ENCODE measurements at regions of chr2 and their contacts with region 1.

Region 1: DNA sequence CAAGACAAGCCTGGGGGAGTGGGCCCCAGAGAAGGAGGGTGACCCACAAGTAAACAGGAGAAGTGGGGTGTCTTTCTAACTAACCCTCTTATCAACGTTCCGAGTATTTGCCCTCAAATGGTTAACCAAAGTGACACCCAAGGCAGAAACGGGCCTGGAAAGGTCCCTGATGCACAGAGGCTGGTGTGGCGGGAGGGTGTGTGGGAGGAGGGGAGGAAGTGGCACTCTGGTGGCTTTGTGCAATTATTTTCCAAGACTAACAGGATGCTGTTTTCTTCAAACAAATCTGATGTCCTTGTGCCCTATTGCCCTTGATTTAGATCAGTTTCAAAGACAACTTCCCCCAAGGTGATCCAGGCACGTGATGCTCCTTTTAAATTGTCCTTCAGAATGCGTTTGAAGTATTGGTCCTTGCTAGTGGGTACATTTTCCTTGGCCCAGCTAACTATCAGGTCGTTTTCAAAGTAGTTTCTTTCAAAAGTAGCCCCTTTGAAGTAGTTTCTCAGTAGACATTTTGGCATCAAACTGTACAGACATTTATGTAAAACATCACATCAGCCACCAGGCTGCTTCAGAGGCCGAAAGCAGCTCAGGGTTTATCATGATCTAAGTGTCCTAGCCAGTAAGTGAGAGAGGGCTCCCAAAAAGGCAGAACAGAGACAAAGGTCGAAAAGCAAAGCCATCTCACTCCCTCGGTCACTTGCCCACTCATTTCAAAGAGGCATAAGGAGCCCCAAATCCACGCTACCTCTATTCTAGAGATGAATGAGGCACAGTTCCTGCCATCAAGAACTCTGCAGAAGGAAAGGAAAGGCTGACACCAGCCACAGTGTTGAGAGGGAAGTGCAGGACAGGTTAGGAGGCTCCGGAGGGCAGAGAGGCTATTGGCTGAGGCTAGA is 371.1 kb upstream of the ID2 start:
- DNase-seq: peak in 6 of 9 donors; percentile 17 to 67 (median 28)
- ATAC-seq: peak; percentile 58
- H3K4me3 ChIP-seq: no peak overlapping the region
- H3K4me3 Mint-ChIP-seq: peak overlapping the region in 3 of 10 donors; percentile 16 to 48 (median 18)
- H3K27ac ChIP-seq: no peak overlapping the region
- H3K27ac Mint-ChIP-seq: peak overlapping the region in 7 of 9 donors; percentile 3 to 86 (median 44)
- H3K4me1 ChIP-seq: peaks cover 6 to 64% of the 10 kb centered on the region in 2 donors
- H3K4me1 Mint-ChIP-seq: peaks cover 17 to 85% (median 34%) of the 10 kb centered on the region in 7 donors
- H3K27me3 ChIP-seq: no peaks in the 10 kb centered on the region
- H3K27me3 Mint-ChIP-seq: peaks cover 0 to 5% (median 0%) of the 10 kb centered on the region in 5 donors

Region 2: GRCh38 chr2:8334866-8335325 is 24.1 kb after region 1 on chr2:
- CTCF ChIA-PET with region 1: no interaction called
- POLR2A ChIA-PET with region 1: no interaction called
- intact Hi-C with region 1: loop called in 1 of 2 experiments (anchors 2 kb)
- DNase-seq: no peak
- ATAC-seq: peak; percentile 76
- H3K4me3 ChIP-seq: no peak overlapping the region
- H3K4me3 Mint-ChIP-seq: peak overlapping the region in 1 of 10 donors; percentile 3
- H3K27ac ChIP-seq: no peak overlapping the region
- H3K27ac Mint-ChIP-seq: peak overlapping the region in 1 of 9 donors; percentile 62
- H3K4me1 ChIP-seq: peaks cover 14 to 22% of the 10 kb centered on the region in 2 donors
- H3K4me1 Mint-ChIP-seq: peaks cover 13 to 33% (median 14%) of the 10 kb centered on the region in 7 donors
- H3K27me3 ChIP-seq: no peaks in the 10 kb centered on the region
- H3K27me3 Mint-ChIP-seq: peaks cover 0 to 11% (median 0%) of the 10 kb centered on the region in 5 donors

Region 3: GRCh38 chr2:8488001-8488738 is 177.4 kb after region 1 on chr2:
- CTCF ChIA-PET with region 1: no interaction called
- POLR2A ChIA-PET with region 1: no interaction called
- intact Hi-C with region 1: no loop called
- DNase-seq: peak in 5 of 9 donors; percentile 10 to 56 (median 41)
- ATAC-seq: peak; percentile 91
- H3K4me3 ChIP-seq: peak overlapping the region; percentile 35
- H3K4me3 Mint-ChIP-seq: peak overlapping the region; percentile 38 to 72 (median 64)
- H3K27ac ChIP-seq: no peak overlapping the region
- H3K27ac Mint-ChIP-seq: peak overlapping the region in 7 of 9 donors; percentile 25 to 88 (median 34)
- H3K4me1 ChIP-seq: peaks cover 8 to 53% of the 10 kb centered on the region in 2 donors
- H3K4me1 Mint-ChIP-seq: peaks cover 13 to 57% (median 15%) of the 10 kb centered on the region in 7 donors
- H3K27me3 ChIP-seq: no peaks in the 10 kb centered on the region
- H3K27me3 Mint-ChIP-seq: peaks cover 0 to 8% (median 0%) of the 10 kb centered on the region in 5 donors

Measured in naive thymus-derived CD4-positive, alpha-beta T cell (primary cell).